ENCODE measurements at regions of chr9 and their contacts with region 1.

Region 1: DNA sequence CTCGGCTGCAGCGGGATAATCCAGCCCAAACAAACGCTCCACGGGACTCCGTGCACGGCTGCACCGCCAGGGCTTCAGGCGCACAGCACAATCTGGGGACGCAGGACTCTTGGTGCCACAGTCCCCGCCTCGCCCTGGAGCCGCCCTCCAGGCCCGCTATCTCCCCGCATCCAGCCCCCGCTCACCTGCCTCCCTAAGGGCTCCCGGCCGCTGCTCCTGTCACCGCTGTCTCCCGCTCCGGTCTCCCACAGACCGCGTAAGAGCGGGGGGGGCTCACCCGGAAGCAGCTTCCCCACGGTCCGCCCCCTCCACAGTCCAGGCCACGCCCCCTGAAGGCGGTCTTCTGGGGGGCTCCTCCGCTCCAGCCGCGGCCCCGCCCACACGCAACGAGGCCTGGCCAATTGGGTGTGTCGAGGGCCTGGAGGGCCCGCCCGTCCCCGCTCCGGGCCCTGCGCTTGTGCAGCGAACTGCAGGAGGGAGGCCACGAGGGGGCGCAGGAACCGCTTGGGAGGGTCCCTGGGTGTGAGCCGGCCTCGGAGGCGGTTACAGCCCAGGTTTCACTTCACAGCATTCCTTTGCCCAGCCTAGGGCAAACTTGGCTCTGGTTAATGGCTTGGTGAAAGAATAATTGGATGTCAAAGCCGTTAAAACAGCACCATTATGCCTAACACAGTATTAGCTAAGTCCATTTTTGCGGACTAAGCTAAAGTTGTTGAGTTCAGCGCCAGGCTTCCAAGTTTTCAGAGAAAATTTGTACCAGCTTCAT is at the start of gene ALAD:
- DNase-seq: peak; percentile 99
- H3K4me3 ChIP-seq: peak within 1 kb of the TSS; percentile 48 to 84 (median 51)
- H3K27ac ChIP-seq: no peak within 1 kb of the TSS
- H3K4me1 ChIP-seq: peaks cover 24% of the 10 kb centered on the region
- H3K27me3 ChIP-seq: no peaks in the 10 kb centered on the region
- CTCF ChIP-seq: peak; percentile 99
- POLR2A ChIP-seq: peak; percentile 68
- total RNA-seq, gene ALAD: 29.5 TPM in 2 replicates

Region 2: DNA sequence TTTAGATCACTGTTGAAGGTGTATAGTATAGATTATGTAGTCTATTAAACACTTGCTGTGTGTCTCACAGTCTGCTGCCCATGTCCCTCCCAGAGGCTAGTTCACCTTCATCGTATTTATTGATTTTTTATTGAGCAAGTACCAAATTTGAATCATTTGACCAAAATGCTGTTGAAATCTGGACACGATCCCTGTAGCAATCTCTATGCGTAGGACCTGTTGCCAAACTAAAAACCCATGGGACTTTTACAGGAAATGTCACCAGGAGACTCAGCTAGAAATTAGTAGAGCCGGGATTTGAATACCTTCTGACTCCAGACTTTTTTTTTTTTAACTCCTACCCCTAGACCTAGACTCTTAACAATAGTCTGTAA is 162.4 kb before region 1 on chr9:
- CTCF ChIA-PET with region 1: no interaction called
- POLR2A ChIA-PET with region 1: no interaction called
- dilution Hi-C with region 1: no loop called
- intact Hi-C with region 1: no loop called
- DNase-seq: no peak
- H3K4me3 ChIP-seq: no peak overlapping the region
- H3K27ac ChIP-seq: no peak overlapping the region
- H3K4me1 ChIP-seq: peaks cover under 1% of the 10 kb centered on the region
- H3K27me3 ChIP-seq: no peaks in the 10 kb centered on the region
- CTCF ChIP-seq: no peak
- POLR2A ChIP-seq: no peak

Region 3: GRCh38 chr9:113309204-113309813 is 91.9 kb before region 1 on chr9:
- CTCF ChIA-PET with region 1: interaction called, 14 read pairs
- POLR2A ChIA-PET with region 1: no interaction called
- dilution Hi-C with region 1: no loop called
- intact Hi-C with region 1: loop called (anchors 1 kb)
- DNase-seq: peak; percentile 55
- H3K4me3 ChIP-seq: no peak overlapping the region
- H3K27ac ChIP-seq: no peak overlapping the region
- H3K4me1 ChIP-seq: no peaks in the 10 kb centered on the region
- H3K27me3 ChIP-seq: no peaks in the 10 kb centered on the region
- CTCF ChIP-seq: peak; percentile 41 to 53
- POLR2A ChIP-seq: no peak

Region 4: DNA sequence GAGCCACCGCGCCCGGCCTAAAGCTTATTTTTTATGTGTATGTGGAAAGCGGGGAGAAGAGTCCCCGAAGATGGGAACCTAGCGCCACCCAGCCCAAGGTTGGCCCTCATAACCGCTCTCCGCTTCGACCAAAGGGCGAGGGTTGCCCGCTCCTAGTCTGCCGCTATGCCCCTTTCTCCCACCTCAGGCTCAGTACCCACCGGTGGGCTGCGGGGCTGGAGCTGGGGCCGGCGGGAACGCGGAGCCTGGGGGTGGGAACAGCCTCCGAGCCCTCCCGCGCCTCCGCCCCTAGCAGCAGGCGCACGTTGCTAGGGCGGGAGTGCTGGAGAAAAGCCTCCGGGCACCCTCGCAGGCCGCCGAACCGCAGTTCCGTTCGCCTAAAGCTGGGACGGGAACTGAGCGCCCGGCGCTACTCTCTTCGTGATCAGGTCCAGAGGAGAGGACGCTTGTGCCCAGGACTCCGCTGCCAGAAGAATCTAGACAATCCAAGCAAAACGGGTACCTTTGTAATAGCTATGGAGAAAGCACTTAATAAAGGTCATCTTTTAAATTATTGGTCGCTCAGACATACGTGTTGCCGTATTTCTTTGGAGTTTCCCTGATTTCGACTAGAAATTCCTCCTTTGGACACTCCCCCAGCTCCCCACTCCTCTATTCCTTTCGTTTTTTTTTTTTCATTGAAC is 61.1 kb before region 1 on chr9 and contains the start of gene WDR31:
- CTCF ChIA-PET with region 1: interaction called, 15 read pairs
- POLR2A ChIA-PET with region 1: no interaction called
- dilution Hi-C with region 1: no loop called
- intact Hi-C with region 1: loop called (anchors 2 kb)
- DNase-seq: peak; percentile 93
- H3K4me3 ChIP-seq: peak within 1 kb of the TSS; percentile 86 to 90 (median 86)
- H3K27ac ChIP-seq: peak within 1 kb of the TSS; percentile 20
- H3K4me1 ChIP-seq: peaks cover 8% of the 10 kb centered on the region
- H3K27me3 ChIP-seq: peaks cover 0 to 5% of the 10 kb centered on the region in 2 experiments
- CTCF ChIP-seq: no peak
- POLR2A ChIP-seq: peak; percentile 58
- total RNA-seq, gene WDR31: 0.62 and 1.00 TPM in 2 replicates

Measured in endothelial cell of umbilical vein (primary cell).